ENCODE measurements at regions of chr1 and their contacts with region 1.

Region 1: GRCh38 chr1:180065811-180066549 is 88.7 kb upstream of the QSOX1 start:
- DNase-seq: no peak
- ATAC-seq: no peak
- H3K4me3 ChIP-seq: no peak overlapping the region
- H3K4me3 Mint-ChIP-seq: no peak overlapping the region
- H3K27ac ChIP-seq: no peak overlapping the region
- H3K27ac Mint-ChIP-seq: no peak overlapping the region
- H3K4me1 ChIP-seq: no peaks in the 10 kb centered on the region
- H3K4me1 Mint-ChIP-seq: no peaks in the 10 kb centered on the region
- H3K27me3 ChIP-seq: no peaks in the 10 kb centered on the region
- H3K27me3 Mint-ChIP-seq: no peaks in the 10 kb centered on the region
- CTCF ChIP-seq: no peak

Region 2: DNA sequence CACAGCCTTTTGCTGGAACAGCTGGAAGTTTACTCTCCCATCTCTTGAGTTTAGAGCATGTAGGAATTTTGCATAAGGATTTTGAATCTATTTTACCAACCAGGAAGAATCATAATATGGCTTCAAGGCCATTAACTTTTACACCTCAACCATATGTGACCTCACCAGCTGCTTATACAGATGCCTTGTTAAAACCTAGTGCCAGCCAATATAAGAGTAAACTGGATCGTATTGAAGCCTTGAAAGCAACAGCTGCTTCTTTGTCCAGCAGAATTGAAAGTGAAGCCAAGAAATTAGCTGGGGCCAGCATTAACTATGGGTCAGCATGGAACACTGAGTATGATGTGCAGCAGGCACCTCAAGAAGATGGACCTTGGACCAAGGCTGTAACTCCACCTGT is 46.0 kb before region 1 on chr1:
- CTCF ChIA-PET with region 1: no interaction called
- POLR2A ChIA-PET with region 1: no interaction called
- intact Hi-C with region 1: loop called in 1 of 2 experiments (anchors 10 kb)
- DNase-seq: no peak
- ATAC-seq: no peak
- H3K4me3 ChIP-seq: no peak overlapping the region
- H3K4me3 Mint-ChIP-seq: no peak overlapping the region
- H3K27ac ChIP-seq: no peak overlapping the region
- H3K27ac Mint-ChIP-seq: no peak overlapping the region
- H3K4me1 ChIP-seq: no peaks in the 10 kb centered on the region
- H3K4me1 Mint-ChIP-seq: no peaks in the 10 kb centered on the region
- H3K27me3 ChIP-seq: no peaks in the 10 kb centered on the region
- H3K27me3 Mint-ChIP-seq: no peaks in the 10 kb centered on the region
- CTCF ChIP-seq: no peak

Region 3: DNA sequence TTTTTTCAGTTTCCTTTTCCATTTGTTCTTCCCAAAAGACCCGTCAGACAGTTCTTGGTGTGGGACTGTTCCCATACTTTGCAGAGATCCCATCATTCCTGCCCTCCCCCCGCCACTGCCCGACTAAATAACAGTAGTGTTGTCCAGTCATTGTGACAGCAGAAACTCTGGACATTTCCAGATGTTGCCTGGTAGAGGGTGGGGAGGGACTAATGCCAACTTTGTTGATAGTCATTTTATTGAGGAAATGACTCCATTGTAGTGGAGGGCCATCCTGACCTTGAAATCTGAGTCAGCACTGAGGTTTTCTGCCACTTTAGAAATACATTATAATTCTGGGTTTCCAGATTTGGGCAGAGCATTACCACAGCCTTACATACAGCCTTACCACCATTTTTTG is 25.9 kb before region 1 on chr1:
- CTCF ChIA-PET with region 1: no interaction called
- POLR2A ChIA-PET with region 1: no interaction called
- intact Hi-C with region 1: loop called in 1 of 2 experiments (anchors 5 kb)
- DNase-seq: no peak
- ATAC-seq: no peak
- H3K4me3 ChIP-seq: no peak overlapping the region
- H3K4me3 Mint-ChIP-seq: no peak overlapping the region
- H3K27ac ChIP-seq: no peak overlapping the region
- H3K27ac Mint-ChIP-seq: no peak overlapping the region
- H3K4me1 ChIP-seq: no peaks in the 10 kb centered on the region
- H3K4me1 Mint-ChIP-seq: no peaks in the 10 kb centered on the region
- H3K27me3 ChIP-seq: no peaks in the 10 kb centered on the region
- H3K27me3 Mint-ChIP-seq: no peaks in the 10 kb centered on the region
- CTCF ChIP-seq: no peak

Measured in CD8-positive, alpha-beta T cell (primary cell).